Activated naive CD4-positive, alpha-beta T cell treated with anti-CD3 and anti-CD28 coated beads for 36 hours (primary cell): ENCODE measurements at regions of chr4 and their contacts with region 1.

Region 1: DNA sequence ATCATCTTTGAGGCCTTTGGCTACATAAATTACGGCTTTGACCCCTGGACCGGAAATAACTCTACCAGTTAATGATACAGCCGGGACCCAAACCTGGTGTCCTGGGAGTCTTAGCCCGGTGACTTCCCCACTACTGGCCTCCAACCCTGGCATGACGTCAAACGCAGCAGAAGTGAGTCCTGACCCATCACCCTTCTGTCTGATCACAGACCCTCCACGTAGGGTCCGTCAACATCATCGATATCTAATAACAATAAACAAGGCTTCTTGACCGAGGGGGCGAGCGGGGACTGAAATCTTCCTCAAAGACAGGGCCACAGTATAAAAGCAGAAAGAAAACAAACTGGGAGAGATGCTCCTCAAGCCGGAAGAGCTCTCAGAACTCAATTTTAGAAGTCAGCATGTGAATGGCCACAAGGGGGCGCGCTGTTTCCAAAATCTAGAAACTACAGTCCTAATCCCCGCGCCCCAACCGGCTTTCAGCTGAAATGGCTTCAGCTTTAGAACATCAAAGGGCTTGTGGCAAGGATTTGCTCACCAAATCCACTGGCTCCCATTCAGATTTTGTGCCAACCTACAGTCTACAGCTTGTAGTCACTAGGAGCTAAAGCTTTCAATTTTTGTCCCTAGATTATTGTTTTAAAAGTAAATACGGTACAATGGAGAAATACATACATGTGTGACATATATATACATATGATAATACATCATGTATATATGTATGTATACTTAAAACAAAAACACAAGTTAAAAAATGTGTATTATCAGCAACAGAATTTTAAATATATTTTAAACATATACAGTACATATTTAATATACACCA is 46.4 kb upstream of the ENPP6 start:
- DNase-seq: peak; percentile 99
- H3K4me3 Mint-ChIP-seq: no peak overlapping the region
- H3K27ac Mint-ChIP-seq: no peak overlapping the region
- H3K4me1 Mint-ChIP-seq: peaks cover 47% of the 10 kb centered on the region
- H3K27me3 Mint-ChIP-seq: no peaks in the 10 kb centered on the region

Region 2: GRCh38 chr4:184237612-184238011 is 26.5 kb before region 1 on chr4:
- CTCF ChIA-PET with region 1: interaction called, 3 read pairs
- intact Hi-C with region 1: loop called (anchors 1 kb)
- DNase-seq: peak; percentile 84
- H3K4me3 Mint-ChIP-seq: peak overlapping the region; percentile 32
- H3K27ac Mint-ChIP-seq: peak overlapping the region; percentile 93
- H3K4me1 Mint-ChIP-seq: peaks cover 40% of the 10 kb centered on the region
- H3K27me3 Mint-ChIP-seq: no peaks in the 10 kb centered on the region

Region 3: GRCh38 chr4:184310171-184310567 is 46.0 kb after region 1 on chr4:
- CTCF ChIA-PET with region 1: interaction called, 6 read pairs
- intact Hi-C with region 1: loop called (anchors 1 kb)
- DNase-seq: peak; percentile 69
- H3K4me3 Mint-ChIP-seq: no peak overlapping the region
- H3K27ac Mint-ChIP-seq: no peak overlapping the region
- H3K4me1 Mint-ChIP-seq: peaks cover 32% of the 10 kb centered on the region
- H3K27me3 Mint-ChIP-seq: peaks cover 3% of the 10 kb centered on the region

Region 4: GRCh38 chr4:184417802-184418511 is 153.8 kb after region 1 on chr4:
- CTCF ChIA-PET with region 1: interaction called, 12 read pairs
- intact Hi-C with region 1: loop called (anchors 1 kb)
- DNase-seq: peak; percentile 27
- H3K4me3 Mint-ChIP-seq: no peak overlapping the region
- H3K27ac Mint-ChIP-seq: peak overlapping the region; percentile 73
- H3K4me1 Mint-ChIP-seq: peaks cover 84% of the 10 kb centered on the region
- H3K27me3 Mint-ChIP-seq: no peaks in the 10 kb centered on the region

Region 5: GRCh38 chr4:184514121-184514988 is 250.2 kb after region 1 on chr4:
- CTCF ChIA-PET with region 1: interaction called, 7 read pairs
- intact Hi-C with region 1: loop called (anchors 1 kb)
- DNase-seq: peak; percentile 86
- H3K4me3 Mint-ChIP-seq: peak overlapping the region; percentile 23
- H3K27ac Mint-ChIP-seq: peak overlapping the region; percentile 66
- H3K4me1 Mint-ChIP-seq: peaks cover 35% of the 10 kb centered on the region
- H3K27me3 Mint-ChIP-seq: no peaks in the 10 kb centered on the region

Region 6: DNA sequence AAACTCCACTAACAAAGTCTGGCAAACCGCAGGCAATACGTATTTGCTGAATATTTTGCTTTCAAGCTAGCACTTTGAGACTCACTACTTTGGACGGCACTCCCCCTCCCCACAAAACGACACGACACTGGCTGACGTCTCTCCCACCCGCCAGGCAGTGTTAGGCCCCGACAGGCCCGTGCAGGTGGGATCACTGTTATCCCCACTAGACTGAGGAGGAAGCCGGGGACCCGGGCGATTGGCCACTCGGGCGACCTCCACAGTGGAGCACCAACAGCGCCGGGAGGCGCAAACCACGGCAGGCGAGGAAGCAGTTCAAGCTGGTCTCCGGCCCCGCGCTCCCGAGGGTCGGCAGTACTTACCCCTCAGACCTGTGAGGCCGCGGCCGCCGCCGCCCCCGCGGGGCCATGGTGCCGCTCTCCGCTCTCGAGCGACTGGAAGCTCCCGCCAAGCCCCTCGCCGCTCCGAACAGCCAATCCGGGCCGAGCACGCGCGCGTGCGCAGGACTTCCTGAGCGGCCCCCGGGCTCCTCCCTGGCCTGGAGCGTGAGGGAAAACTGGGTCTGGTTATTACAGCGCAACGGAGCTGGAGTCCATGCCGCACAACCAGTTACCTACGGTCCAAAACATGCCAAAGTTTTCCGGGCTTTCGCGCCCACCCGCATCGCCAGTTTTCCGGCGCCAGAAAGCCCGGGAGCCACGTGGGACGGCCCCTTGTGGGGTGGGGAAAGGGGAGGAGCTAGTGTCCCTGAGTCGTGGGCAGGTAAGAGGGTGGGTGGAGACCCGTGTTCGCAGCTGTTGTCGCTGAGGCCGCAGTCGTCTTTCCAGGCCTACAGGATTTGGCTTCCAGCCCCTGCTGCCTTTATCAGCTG is 469.8 kb after region 1 on chr4 and contains the start of gene CENPU:
- CTCF ChIA-PET with region 1: interaction called, 3 read pairs
- intact Hi-C with region 1: loop called (anchors 1 kb)
- DNase-seq: peak; percentile 97
- H3K4me3 Mint-ChIP-seq: peak within 1 kb of the TSS; percentile 97
- H3K27ac Mint-ChIP-seq: peak within 1 kb of the TSS; percentile 86
- H3K4me1 Mint-ChIP-seq: peaks cover 19% of the 10 kb centered on the region
- H3K27me3 Mint-ChIP-seq: no peaks in the 10 kb centered on the region
- total RNA-seq, gene CENPU: 78.7 to 91.5 TPM

Region 7: GRCh38 chr4:184907216-184907615 is 643.1 kb after region 1 on chr4:
- CTCF ChIA-PET with region 1: no interaction called
- intact Hi-C with region 1: loop called (anchors 5 kb)
- DNase-seq: peak; percentile 48
- H3K4me3 Mint-ChIP-seq: no peak overlapping the region
- H3K27ac Mint-ChIP-seq: peak overlapping the region; percentile 14
- H3K4me1 Mint-ChIP-seq: peaks cover 7% of the 10 kb centered on the region
- H3K27me3 Mint-ChIP-seq: no peaks in the 10 kb centered on the region